ENCODE measurements at regions of chr11 and their contacts with region 1.

Region 1: DNA sequence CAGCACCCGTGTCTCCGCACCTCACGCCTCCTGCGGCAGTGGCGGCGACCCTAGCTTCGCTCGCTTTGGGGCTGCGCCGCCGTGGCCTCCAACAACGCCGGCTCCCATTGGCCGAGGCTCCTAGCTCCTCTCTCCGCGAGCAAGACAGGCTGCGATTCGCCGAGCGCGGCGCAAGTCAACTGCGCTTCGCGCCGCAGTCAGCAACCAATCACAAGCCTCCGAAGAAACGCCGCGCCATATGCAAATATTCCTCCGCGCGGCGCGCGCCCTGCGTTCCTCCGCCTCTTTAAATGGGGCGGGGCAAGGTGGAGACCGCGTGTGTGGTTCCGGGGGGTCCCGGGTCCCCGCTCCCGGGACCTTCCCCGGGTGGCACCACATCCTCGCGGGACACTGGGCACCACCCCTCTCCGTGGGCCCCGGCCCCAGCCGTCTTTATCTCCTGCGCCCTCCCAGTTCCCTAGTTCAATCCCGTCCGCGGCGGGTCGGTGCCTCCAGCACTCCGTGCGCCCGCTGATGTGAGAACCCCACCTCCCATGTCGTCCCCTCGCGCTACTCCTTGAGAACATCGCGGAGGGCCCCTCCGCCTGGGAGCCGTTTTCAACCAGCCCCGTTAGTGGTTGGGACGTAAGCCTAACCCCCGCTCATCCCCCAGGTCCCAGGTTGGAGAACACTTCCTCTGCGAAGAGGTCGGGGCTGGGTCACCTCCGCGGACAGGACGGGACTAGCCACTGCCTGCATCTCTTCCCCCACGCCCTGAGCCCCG is at the start of gene NAP1L4:
- DNase-seq: peak; percentile 96
- H3K4me3 Mint-ChIP-seq: peak within 1 kb of the TSS; percentile 100
- H3K27ac Mint-ChIP-seq: peak within 1 kb of the TSS; percentile 99
- H3K4me1 Mint-ChIP-seq: peaks cover 25% of the 10 kb centered on the region
- H3K27me3 Mint-ChIP-seq: no peaks in the 10 kb centered on the region
- total RNA-seq, gene NAP1L4: 267 and 286 TPM in 2 replicates

Region 2: GRCh38 chr11:2507945-2508749 is 484.3 kb before region 1 on chr11:
- intact Hi-C with region 1: no loop called
- DNase-seq: peak; percentile 6
- H3K4me3 Mint-ChIP-seq: no peak overlapping the region
- H3K27ac Mint-ChIP-seq: no peak overlapping the region
- H3K4me1 Mint-ChIP-seq: no peaks in the 10 kb centered on the region
- H3K27me3 Mint-ChIP-seq: no peaks in the 10 kb centered on the region

Region 3: DNA sequence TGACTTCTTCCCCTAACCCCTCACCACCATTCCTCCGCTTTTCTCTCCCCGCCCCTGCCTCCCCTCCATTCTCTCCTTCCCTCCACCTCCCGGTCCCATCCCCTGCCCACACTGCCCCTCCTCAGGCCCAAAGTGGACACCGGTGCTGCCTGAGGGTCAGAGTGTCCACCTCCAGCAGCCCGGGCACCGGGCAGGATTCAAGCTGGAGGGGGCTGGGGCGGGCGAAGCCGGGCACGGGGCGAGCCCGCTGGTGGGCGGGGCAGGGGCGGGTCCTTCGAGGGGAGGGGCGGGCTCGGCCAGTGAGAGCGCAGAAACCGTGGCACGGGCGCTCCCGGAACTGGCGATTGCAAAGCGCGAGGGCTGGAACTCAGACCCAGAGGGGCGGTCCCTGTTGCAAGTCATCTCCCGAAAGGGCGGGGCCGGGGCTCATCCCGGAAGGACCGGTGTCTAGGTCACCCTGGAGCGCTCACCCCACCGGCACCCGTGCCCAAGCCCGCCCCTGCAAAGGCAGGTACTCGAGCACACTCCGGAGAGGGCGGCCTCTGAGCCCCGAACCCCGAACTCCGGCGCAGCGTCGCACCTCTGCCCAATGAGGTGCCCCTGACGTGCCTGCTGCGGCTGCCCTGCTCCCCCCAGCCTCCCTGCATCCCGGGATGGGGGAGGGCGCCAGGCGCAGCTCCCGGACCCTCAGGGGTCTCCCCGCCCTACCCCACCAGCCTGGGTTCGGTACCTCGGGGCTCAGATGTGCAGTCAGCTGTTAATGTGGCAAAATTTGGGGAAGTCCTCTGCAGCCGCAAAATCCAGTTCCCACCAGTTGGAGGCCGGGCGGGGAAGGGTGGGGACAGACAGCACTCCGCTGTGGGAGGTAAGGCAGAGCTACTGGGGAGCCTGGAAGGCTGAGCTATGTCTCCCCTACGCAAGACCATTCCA is 90.3 kb before region 1 on chr11:
- intact Hi-C with region 1: loop called (anchors 2 kb)
- DNase-seq: peak; percentile 94
- H3K4me3 Mint-ChIP-seq: peak overlapping the region; percentile 74
- H3K27ac Mint-ChIP-seq: peak overlapping the region; percentile 61
- H3K4me1 Mint-ChIP-seq: peaks cover 37% of the 10 kb centered on the region
- H3K27me3 Mint-ChIP-seq: no peaks in the 10 kb centered on the region

Region 4: DNA sequence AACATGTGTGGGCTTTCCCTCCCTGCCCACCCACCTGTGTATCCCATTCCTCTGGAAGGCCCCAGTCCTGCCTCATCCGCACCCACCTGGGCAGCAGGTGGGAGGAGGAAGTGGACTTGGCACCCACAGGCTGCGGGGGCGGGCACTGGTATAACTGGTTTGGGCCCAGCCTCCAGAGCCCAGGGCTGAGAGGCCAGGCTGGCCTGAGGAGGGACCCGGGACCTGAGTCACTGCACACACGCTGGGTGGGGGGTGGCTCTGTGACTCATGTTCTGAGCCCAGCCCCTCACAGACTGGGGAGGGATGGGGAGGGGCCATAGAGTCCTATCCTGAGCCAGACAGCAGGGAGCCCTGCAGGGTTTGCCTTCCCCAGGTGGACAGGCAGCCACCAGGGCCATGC is 79.9 kb before region 1 on chr11:
- intact Hi-C with region 1: no loop called
- DNase-seq: no peak
- H3K4me3 Mint-ChIP-seq: no peak overlapping the region
- H3K27ac Mint-ChIP-seq: no peak overlapping the region
- H3K4me1 Mint-ChIP-seq: no peaks in the 10 kb centered on the region
- H3K27me3 Mint-ChIP-seq: no peaks in the 10 kb centered on the region

Region 5: DNA sequence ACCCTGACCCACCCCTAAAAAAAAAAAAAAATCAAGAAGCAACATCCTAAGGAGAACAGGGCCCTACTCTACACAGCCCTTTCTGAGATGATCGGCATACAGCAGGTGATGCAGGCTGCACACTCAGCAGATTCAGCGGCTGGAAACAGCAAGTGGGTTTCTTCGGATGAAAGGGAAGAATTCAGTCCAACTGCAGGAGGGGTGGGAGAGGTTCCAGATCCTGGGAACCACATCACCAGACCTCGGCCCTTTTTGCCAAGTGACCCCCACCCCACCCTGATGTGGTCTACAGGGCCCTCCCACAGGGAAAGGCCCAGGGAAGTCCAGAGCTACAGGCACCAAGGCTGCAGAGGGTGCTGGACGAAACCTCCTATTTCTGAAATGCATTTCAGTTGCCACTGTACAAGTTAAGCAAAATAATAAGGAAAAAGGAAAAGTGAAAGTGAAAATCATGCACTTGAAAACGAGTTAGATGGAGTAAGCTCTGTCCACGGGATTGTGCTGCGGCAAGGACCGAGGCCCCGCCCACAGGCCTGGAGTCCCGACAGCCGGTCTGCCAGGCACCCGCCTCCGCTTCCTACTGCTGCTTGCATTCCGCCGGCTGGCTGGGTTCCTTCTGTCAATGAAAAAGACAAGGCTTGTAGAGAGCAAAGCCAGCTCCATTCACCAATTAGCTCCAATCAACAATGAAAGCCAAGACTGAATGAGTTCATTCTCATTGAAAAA is 47.2 kb before region 1 on chr11:
- intact Hi-C with region 1: loop called (anchors 5 kb)
- DNase-seq: peak; percentile 62
- H3K4me3 Mint-ChIP-seq: no peak overlapping the region
- H3K27ac Mint-ChIP-seq: peak overlapping the region; percentile 33
- H3K4me1 Mint-ChIP-seq: peaks cover 37% of the 10 kb centered on the region
- H3K27me3 Mint-ChIP-seq: no peaks in the 10 kb centered on the region

Region 6: DNA sequence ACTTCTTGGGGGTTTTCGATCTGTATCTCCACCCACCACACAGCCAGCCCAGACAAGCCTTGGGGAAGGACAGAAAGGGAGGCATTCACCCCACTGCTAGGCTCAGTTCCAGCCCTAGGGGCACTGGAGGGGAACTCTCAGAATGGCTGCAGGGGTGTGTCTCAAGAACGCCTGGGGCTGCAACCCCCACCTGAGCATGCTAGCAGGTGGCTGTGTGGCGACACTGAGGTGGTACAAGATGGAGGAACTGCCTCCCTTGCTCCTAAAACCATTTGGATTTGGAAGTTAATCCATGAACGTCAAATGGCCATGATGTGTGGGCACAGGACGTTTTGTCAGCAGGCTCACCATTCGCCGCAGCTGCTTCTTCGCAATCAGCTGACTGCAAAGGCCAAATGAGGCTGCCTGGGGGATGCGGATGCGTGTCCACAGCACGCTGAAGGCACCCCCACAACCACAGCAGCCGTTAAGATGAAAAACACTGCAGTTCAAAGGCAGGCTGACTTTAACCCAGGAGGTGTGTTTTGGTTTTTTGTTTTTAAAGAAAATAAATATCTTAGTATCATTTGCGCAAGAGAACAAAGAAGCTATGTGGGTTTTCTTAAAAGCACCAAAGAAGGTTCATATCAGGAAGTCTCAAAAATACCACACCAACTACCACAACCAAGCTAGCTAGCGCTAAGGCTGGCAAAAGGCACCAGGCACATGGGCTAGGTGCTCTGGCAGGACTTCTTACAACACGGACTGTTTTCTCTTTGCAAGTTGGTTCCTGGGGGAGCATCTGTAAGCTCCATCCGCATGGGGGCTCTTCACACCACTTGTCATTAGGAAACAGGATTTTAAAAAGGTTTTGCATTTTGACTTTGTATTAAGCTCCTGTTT is 21.9 kb after region 1 on chr11:
- intact Hi-C with region 1: loop called (anchors 1 kb)
- DNase-seq: peak; percentile 75
- H3K4me3 Mint-ChIP-seq: peak overlapping the region; percentile 52
- H3K27ac Mint-ChIP-seq: peak overlapping the region; percentile 92
- H3K4me1 Mint-ChIP-seq: peaks cover 46% of the 10 kb centered on the region
- H3K27me3 Mint-ChIP-seq: no peaks in the 10 kb centered on the region

Region 7: DNA sequence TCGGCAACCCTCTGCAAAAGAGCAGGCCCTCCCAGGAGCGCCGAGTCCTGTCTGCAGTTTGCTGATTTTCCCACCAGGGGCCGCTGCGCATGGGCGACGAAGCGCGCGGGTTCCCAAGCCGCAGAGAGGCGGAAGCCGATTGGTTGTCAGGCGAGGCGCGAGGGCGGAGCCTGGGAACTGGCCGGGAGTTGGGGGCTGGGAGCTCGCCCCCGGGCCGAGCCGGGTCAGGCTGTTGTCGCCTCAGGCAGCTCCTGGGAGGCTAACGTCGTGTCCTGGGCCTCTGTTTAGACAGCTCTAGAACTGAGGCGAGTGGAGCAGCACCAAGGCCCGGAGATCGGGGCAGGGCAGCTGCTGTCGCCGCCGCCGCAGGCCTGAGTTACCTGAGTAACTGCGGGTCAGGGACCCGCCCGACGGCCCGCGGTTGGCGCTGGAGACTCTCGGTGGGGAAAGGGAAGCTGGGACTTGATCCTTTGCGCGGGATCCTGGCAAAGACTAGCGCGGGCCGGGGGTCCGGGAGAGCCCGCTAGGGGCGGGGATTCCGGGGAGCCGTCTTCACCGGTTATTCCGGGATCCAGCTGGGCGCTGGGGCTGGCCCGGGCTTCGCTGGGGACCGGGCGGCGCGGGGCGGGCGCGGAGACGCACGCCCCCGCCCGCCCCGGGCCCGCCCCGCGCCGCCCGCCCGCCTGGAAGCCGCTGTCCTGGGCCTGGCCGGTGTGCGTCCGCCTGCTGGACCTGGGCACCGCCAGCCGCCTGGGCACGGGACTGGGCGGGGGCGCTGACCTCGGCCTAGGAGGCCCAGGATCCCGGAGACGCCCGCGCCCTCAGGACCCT is 862.8 kb after region 1 on chr11 and contains the start of gene STIM1:
- intact Hi-C with region 1: loop called (anchors 5 kb)
- DNase-seq: peak; percentile 98
- H3K4me3 Mint-ChIP-seq: peak within 1 kb of the TSS; percentile 99
- H3K27ac Mint-ChIP-seq: peak within 1 kb of the TSS; percentile 96
- H3K4me1 Mint-ChIP-seq: peaks cover 52% of the 10 kb centered on the region
- H3K27me3 Mint-ChIP-seq: no peaks in the 10 kb centered on the region
- total RNA-seq, gene STIM1: 77.6 and 78.0 TPM in 2 replicates